ENCODE measurements at regions of chr4 and their contacts with region 1.

Region 1: GRCh38 chr4:114072781-114073180 is 93.3 kb upstream of the ARSJ start:
- DNase-seq: no peak
- ATAC-seq: no peak
- H3K4me3 Mint-ChIP-seq: no peak overlapping the region
- H3K27ac Mint-ChIP-seq: no peak overlapping the region
- H3K4me1 Mint-ChIP-seq: no peaks in the 10 kb centered on the region
- H3K27me3 Mint-ChIP-seq: peaks cover 17% of the 10 kb centered on the region

Region 2: GRCh38 chr4:113394730-113395530 is 677.9 kb before region 1 on chr4:
- CTCF ChIA-PET with region 1: interaction called, 23 read pairs
- DNase-seq: peak; percentile 65
- ATAC-seq: peak; percentile 95
- H3K4me3 Mint-ChIP-seq: no peak overlapping the region
- H3K27ac Mint-ChIP-seq: no peak overlapping the region
- H3K4me1 Mint-ChIP-seq: peaks cover 4% of the 10 kb centered on the region
- H3K27me3 Mint-ChIP-seq: peaks cover 4% of the 10 kb centered on the region